ENCODE measurements at regions of chr14 and their contacts with region 1.

Region 1: GRCh38 chr14:36747411-36748184 is 85.9 kb downstream of the PAX9 start:
- DNase-seq: no peak
- ATAC-seq: peak; percentile 86
- H3K4me3 ChIP-seq: no peak overlapping the region
- H3K27ac ChIP-seq: no peak overlapping the region
- H3K4me1 ChIP-seq: no peaks in the 10 kb centered on the region
- H3K27me3 ChIP-seq: no peaks in the 10 kb centered on the region
- CTCF ChIP-seq: peak; percentile 48 to 84 (median 70); a peak in 5 of 6 replicates
- POLR2A ChIP-seq: no peak
- RAD21 ChIP-seq: peak; percentile 31

Region 2: GRCh38 chr14:36757734-36758601 is 10.4 kb after region 1 on chr14:
- CTCF ChIA-PET with region 1: interaction called, 13 read pairs
- POLR2A ChIA-PET with region 1: no interaction called
- RAD21 ChIA-PET with region 1: no interaction called
- intact Hi-C with region 1: no loop called
- DNase-seq: no peak
- ATAC-seq: no peak
- H3K4me3 ChIP-seq: no peak overlapping the region
- H3K27ac ChIP-seq: no peak overlapping the region
- H3K4me1 ChIP-seq: no peaks in the 10 kb centered on the region
- H3K27me3 ChIP-seq: no peaks in the 10 kb centered on the region; the same call in 1 of the 2 replicates
- CTCF ChIP-seq: no peak
- POLR2A ChIP-seq: no peak
- RAD21 ChIP-seq: no peak

Region 3: GRCh38 chr14:36767603-36768281 is 20.1 kb after region 1 on chr14:
- CTCF ChIA-PET with region 1: interaction called, 11 read pairs
- POLR2A ChIA-PET with region 1: no interaction called
- RAD21 ChIA-PET with region 1: no interaction called
- intact Hi-C with region 1: no loop called
- DNase-seq: no peak
- ATAC-seq: no peak
- H3K4me3 ChIP-seq: no peak overlapping the region
- H3K27ac ChIP-seq: no peak overlapping the region
- H3K4me1 ChIP-seq: peaks cover 6 to 13% of the 10 kb centered on the region in 2 experiments; a peak in 2 of 4 replicates
- H3K27me3 ChIP-seq: no peaks in the 10 kb centered on the region
- CTCF ChIP-seq: no peak
- POLR2A ChIP-seq: no peak
- RAD21 ChIP-seq: no peak